Esophagus squamous epithelium (tissue), 5 donors: ENCODE measurements at regions of chr10 and their contacts with region 1.

Region 1: GRCh38 chr10:47384148-47384921 is at the start of gene ZNF488:
- DNase-seq: no peak
- H3K4me3 ChIP-seq: peak within 1 kb of the TSS; percentile 67 to 97 (median 82)
- H3K27ac ChIP-seq: peak within 1 kb of the TSS; percentile 80 to 89 (median 86)
- H3K4me1 ChIP-seq: peaks cover 7 to 18% (median 7%) of the 10 kb centered on the region in 3 donors
- H3K27me3 ChIP-seq: no peaks in the 10 kb centered on the region
- CTCF ChIP-seq: peak in 1 of 6 experiments; percentile 12
- POLR2A ChIP-seq: peak in 1 of 4 donors; percentile 23
- total RNA-seq, gene ZNF488: 0.29 to 1.4 (median 0.73) TPM

Region 2: DNA sequence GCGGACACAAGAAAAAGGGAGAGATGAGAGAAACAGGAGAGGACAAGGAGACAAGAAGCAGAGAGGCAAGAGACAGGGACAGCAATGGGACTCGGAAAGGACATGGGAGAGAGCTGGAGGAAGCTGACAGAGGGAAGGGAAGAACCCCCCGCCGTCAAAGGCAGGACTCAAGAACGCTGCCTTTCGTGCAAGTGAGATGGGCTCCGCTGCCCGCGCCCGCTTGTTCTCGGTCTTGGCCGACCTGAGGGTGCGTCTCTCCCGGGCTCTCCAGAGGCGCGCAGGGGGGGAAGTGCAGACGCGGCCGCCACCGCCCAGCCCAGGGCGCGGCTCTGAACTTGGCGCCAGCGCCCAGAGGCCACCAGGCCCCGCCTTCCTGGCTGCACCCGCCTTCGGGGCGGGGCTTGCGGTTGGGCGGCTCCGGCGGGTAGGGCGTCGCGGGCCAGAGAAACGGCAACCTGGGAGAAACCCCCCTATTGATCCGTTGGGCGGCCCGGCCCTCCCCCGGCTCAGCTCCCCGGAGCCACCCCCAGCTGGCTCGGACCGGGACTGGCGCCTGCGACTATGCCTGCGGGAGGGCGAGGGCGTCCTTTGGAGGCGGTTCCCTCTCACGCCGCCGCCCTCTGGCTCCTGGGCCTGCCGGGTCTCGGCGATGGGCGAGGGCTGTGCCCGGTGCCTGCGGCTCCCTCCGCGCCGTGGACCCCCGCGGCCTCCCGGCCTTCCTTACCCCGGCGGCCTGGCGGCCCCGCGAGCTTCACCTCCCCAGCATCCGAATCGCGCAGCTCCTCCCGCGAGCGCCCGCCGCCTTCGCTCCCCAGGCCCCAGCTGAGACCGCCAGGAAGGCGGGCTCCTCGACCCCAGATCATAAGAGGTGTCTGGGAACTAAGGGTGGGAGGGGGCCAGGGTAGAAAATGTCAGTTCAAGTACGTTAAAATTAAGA is 1099.8 kb before region 1 on chr10:
- intact Hi-C with region 1: loop called (anchors 5 kb)
- DNase-seq: peak; percentile 21
- H3K4me3 ChIP-seq: peak overlapping the region; percentile 61 to 93 (median 70)
- H3K27ac ChIP-seq: peak overlapping the region; percentile 84 to 91 (median 89)
- H3K4me1 ChIP-seq: peaks cover 18 to 32% (median 21%) of the 10 kb centered on the region in 3 donors
- H3K27me3 ChIP-seq: peaks cover 0 to 7% (median 0%) of the 10 kb centered on the region in 4 donors
- CTCF ChIP-seq: peak in 1 of 6 experiments; percentile 9
- POLR2A ChIP-seq: peak in 2 of 4 donors; percentile 47 to 59

Region 3: DNA sequence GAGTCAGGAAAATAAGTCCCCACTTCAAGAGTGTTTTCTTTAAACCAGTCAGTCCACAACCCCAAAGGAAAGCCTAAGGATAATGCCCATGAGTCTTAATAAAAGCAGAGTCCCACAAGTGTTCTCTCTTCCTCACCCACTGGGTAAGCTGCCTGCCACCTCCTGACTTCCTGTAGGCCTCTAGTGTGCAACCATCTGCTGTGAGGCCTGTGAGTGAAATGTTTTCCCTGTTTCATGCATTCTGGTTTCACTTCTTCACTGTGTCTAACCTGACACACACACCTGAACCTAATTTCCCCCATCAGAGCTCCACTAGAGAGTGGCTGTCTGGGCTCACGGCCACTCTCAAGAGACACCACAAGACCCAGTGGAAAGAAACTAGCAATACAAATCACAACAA is 123.2 kb before region 1 on chr10:
- intact Hi-C with region 1: no loop called
- DNase-seq: no peak
- H3K4me3 ChIP-seq: no peak overlapping the region
- H3K27ac ChIP-seq: no peak overlapping the region
- H3K4me1 ChIP-seq: no peaks in the 10 kb centered on the region
- H3K27me3 ChIP-seq: peaks cover 0 to 30% (median 0%) of the 10 kb centered on the region in 4 donors
- CTCF ChIP-seq: no peak
- POLR2A ChIP-seq: no peak